Activated naive CD4-positive, alpha-beta T cell treated with anti-CD3 and anti-CD28 coated beads for 36 hours (primary cell): ENCODE measurements at regions of chr13 and their contacts with region 1.

Region 1: GRCh38 chr13:41061075-41061913 is at the start of gene WBP4:
- DNase-seq: peak; percentile 88
- H3K4me3 Mint-ChIP-seq: peak within 1 kb of the TSS; percentile 95
- H3K27ac Mint-ChIP-seq: peak within 1 kb of the TSS; percentile 98
- H3K4me1 Mint-ChIP-seq: peaks cover 45% of the 10 kb centered on the region
- H3K27me3 Mint-ChIP-seq: peaks cover 4% of the 10 kb centered on the region
- total RNA-seq, gene WBP4: 8.1 to 8.2 TPM

Region 2: GRCh38 chr13:40770934-40771618 is 290.2 kb before region 1 on chr13 and contains the start of gene MRPS31:
- CTCF ChIA-PET with region 1: no interaction called
- intact Hi-C with region 1: loop called (anchors 1 kb)
- DNase-seq: peak; percentile 95
- H3K4me3 Mint-ChIP-seq: peak within 1 kb of the TSS; percentile 98
- H3K27ac Mint-ChIP-seq: peak within 1 kb of the TSS; percentile 95
- H3K4me1 Mint-ChIP-seq: peaks cover 33% of the 10 kb centered on the region
- H3K27me3 Mint-ChIP-seq: no peaks in the 10 kb centered on the region
- total RNA-seq, gene MRPS31: 28.4 to 28.8 TPM

Region 3: GRCh38 chr13:41132512-41133152 is 71.3 kb after region 1 on chr13 and contains the start of gene KBTBD6:
- CTCF ChIA-PET with region 1: no interaction called
- intact Hi-C with region 1: loop called (anchors 1 kb)
- DNase-seq: peak; percentile 98
- H3K4me3 Mint-ChIP-seq: peak within 1 kb of the TSS; percentile 92
- H3K27ac Mint-ChIP-seq: peak within 1 kb of the TSS; percentile 87
- H3K4me1 Mint-ChIP-seq: peaks cover 35% of the 10 kb centered on the region
- H3K27me3 Mint-ChIP-seq: no peaks in the 10 kb centered on the region
- total RNA-seq, gene KBTBD6: 3.9 to 4.0 TPM

Region 4: DNA sequence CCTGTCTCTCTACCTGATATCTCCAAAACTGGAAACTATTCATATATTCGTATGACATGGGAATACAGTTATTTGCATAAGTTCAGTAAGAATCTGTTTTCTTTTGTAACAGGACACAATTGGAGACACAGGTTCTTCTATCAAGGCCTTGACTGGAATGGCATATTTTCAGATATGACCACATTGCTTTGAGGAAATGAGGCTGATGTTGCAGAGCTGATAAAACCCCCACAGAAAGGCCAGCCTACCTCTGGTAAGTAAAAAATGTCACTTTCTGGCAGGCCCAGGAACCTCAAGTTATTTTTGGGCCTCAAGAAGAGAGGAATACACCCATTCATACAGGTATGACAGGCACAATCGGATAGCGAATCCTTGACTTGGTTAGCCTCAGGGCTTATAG is 100.9 kb after region 1 on chr13:
- CTCF ChIA-PET with region 1: no interaction called
- intact Hi-C with region 1: no loop called
- DNase-seq: no peak
- H3K4me3 Mint-ChIP-seq: no peak overlapping the region
- H3K27ac Mint-ChIP-seq: no peak overlapping the region
- H3K4me1 Mint-ChIP-seq: no peaks in the 10 kb centered on the region
- H3K27me3 Mint-ChIP-seq: no peaks in the 10 kb centered on the region

Region 5: GRCh38 chr13:41263261-41264027 is 202.2 kb after region 1 on chr13 and contains the start of gene MTRF1:
- CTCF ChIA-PET with region 1: no interaction called
- intact Hi-C with region 1: loop called (anchors 1 kb)
- DNase-seq: peak; percentile 84
- H3K4me3 Mint-ChIP-seq: peak within 1 kb of the TSS; percentile 90
- H3K27ac Mint-ChIP-seq: peak within 1 kb of the TSS; percentile 95
- H3K4me1 Mint-ChIP-seq: peaks cover 24% of the 10 kb centered on the region
- H3K27me3 Mint-ChIP-seq: no peaks in the 10 kb centered on the region
- total RNA-seq, gene MTRF1: 23.2 to 28.4 TPM

Region 6: DNA sequence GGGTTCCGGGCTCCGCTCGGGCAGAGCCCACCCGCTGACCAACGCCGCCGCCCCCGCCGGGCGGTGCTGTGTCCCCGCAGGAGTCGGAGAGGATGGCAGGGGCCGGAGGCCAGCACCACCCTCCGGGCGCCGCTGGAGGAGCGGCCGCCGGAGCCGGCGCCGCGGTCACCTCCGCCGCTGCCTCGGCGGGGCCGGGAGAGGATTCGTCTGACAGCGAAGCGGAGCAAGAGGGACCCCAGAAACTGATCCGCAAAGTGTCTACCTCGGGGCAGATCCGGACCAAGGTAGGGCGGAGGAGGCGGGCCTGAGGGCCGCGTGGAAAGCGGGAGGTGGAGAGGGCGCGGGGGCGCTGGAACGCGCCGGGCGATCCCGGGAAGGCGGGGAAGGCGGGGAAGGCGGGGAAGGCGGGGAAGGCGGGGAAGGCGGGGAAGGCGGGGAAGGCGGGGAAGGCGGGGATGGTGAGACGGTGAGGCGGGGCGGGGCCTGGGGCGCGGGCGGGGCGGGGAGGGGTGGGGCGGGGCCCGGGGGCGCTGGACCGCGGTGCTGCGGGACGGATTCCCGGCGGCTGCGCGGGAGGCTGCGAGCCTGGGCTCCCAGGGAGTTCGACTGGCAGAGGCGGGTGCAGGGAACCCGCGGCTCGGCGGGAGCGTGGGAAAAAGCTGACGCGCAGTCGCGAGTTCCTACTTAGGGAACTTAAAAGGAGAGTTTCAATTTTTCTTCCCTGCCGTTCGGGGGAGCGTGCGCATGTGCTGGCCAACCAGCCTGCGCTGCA is 987.6 kb after region 1 on chr13:
- CTCF ChIA-PET with region 1: no interaction called
- intact Hi-C with region 1: loop called (anchors 5 kb)
- DNase-seq: peak; percentile 71
- H3K4me3 Mint-ChIP-seq: peak overlapping the region; percentile 89
- H3K27ac Mint-ChIP-seq: peak overlapping the region; percentile 78
- H3K4me1 Mint-ChIP-seq: peaks cover 21% of the 10 kb centered on the region
- H3K27me3 Mint-ChIP-seq: peaks cover 3% of the 10 kb centered on the region